Left lung (tissue), 14 donors: ENCODE measurements at regions of chr19 and their contacts with region 1.

Region 1: GRCh38 chr19:7293795-7294570 is at the start of gene INSR:
- DNase-seq: peak; percentile 83 to 94 (median 91)
- ATAC-seq: peak; percentile 97
- H3K4me3 ChIP-seq: peak within 1 kb of the TSS; percentile 80 to 83
- H3K27ac ChIP-seq: peak within 1 kb of the TSS; percentile 48 to 69
- H3K4me1 ChIP-seq: peaks cover 13 to 27% of the 10 kb centered on the region in 2 donors
- H3K27me3 ChIP-seq: peaks cover 0 to 29% of the 10 kb centered on the region in 2 donors
- CTCF ChIP-seq: no peak
- polyA plus RNA-seq, gene INSR: 14.0 to 18.7 (median 17.6) TPM

Region 2: DNA sequence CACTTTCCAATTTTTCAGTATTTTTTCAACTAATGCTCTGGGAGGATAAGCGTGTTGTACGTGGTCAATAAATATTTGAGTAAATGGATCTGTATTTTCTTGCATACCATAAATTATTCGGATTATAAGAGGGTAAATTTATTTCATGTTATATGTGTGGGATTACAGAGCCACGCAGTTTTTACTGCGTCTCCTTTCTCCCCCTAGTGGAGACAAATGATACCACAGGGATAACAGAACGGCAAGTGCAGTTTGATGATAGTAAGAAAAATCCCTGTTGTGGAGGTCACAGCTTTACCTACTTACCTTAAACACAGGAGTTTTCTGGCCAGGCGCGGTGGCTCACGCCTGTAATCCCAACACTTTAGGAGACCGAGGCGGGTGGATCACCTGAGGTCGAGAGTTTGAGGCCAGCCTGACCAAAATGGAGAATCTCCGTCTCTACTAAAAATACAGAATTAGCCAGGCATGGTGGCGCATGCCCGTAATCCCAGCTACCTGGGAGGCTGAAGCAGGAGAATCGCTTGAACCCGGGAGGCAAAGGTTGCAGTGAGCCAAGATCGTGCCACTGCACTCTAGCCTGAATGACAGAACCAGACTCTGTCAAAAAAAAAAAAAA is 289.6 kb before region 1 on chr19:
- intact Hi-C with region 1: no loop called
- DNase-seq: peak in 1 of 4 donors; percentile 39
- ATAC-seq: peak; percentile 65
- H3K4me3 ChIP-seq: no peak overlapping the region
- H3K27ac ChIP-seq: no peak overlapping the region
- H3K4me1 ChIP-seq: peaks cover 0 to 9% of the 10 kb centered on the region in 2 donors
- H3K27me3 ChIP-seq: peaks cover 0 to 14% of the 10 kb centered on the region in 2 donors
- CTCF ChIP-seq: peak; percentile 45 to 64

Region 3: GRCh38 chr19:7199613-7200533 is 94.1 kb before region 1 on chr19:
- intact Hi-C with region 1: loop called in 1 of 2 experiments (anchors 10 kb)
- DNase-seq: no peak
- ATAC-seq: no peak
- H3K4me3 ChIP-seq: no peak overlapping the region
- H3K27ac ChIP-seq: no peak overlapping the region
- H3K4me1 ChIP-seq: peaks cover 0 to 15% of the 10 kb centered on the region in 2 donors
- H3K27me3 ChIP-seq: peaks cover 0 to 3% of the 10 kb centered on the region in 2 donors
- CTCF ChIP-seq: no peak

Region 4: GRCh38 chr19:7224209-7224686 is 69.7 kb before region 1 on chr19:
- intact Hi-C with region 1: no loop called
- DNase-seq: peak in 2 of 4 donors; percentile 74 to 86
- ATAC-seq: peak; percentile 75
- H3K4me3 ChIP-seq: no peak overlapping the region
- H3K27ac ChIP-seq: no peak overlapping the region
- H3K4me1 ChIP-seq: peaks cover 3 to 7% of the 10 kb centered on the region in 2 donors
- H3K27me3 ChIP-seq: no peaks in the 10 kb centered on the region
- CTCF ChIP-seq: no peak